ENCODE measurements at regions of chr5 and their contacts with region 1.

Region 1: GRCh38 chr5:78563603-78564002 is 85.0 kb downstream of the LHFPL2 start:
- DNase-seq: no peak
- H3K4me3 ChIP-seq: no peak overlapping the region
- H3K27ac ChIP-seq: no peak overlapping the region
- H3K4me1 ChIP-seq: no peaks in the 10 kb centered on the region
- CTCF ChIP-seq: no peak

Region 2: GRCh38 chr5:78577071-78577807 is 13.6 kb after region 1 on chr5:
- CTCF ChIA-PET with region 1: no interaction called
- POLR2A ChIA-PET with region 1: interaction called, 12 read pairs
- intact Hi-C with region 1: no loop called
- DNase-seq: no peak
- H3K4me3 ChIP-seq: no peak overlapping the region
- H3K27ac ChIP-seq: no peak overlapping the region
- H3K4me1 ChIP-seq: peaks cover 24% of the 10 kb centered on the region
- CTCF ChIP-seq: no peak

Region 3: DNA sequence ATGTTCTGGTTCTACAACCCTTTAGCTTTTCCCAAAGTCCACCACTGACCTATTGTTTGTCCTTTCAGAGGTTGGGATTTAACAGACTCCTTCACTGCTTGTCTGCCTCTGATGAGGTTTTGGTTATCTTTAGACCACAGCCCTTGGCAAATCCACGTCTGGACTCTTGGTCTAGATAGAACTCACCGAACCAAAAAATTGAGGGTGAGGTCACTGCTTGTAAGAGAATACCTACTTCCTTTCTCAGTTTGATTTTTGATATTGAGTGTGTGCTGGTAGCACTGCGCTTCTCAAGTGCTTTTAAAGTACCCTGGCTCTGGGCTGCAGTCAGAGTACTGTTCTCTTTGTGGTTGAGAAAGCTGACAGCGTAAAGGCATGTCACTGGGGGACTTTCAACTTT is 734.1 kb after region 1 on chr5:
- CTCF ChIA-PET with region 1: no interaction called
- POLR2A ChIA-PET with region 1: no interaction called
- intact Hi-C with region 1: no loop called
- DNase-seq: no peak
- H3K4me3 ChIP-seq: no peak overlapping the region
- H3K27ac ChIP-seq: no peak overlapping the region
- H3K4me1 ChIP-seq: no peaks in the 10 kb centered on the region
- CTCF ChIP-seq: no peak

Measured in OCI-LY7 (cell line).